ENCODE measurements at regions of chr11 and their contacts with region 1.

Region 1: GRCh38 chr11:45655347-45655756 is 10.1 kb downstream of the CHST1 start:
- DNase-seq: peak; percentile 76 to 89 (median 88)
- ATAC-seq: peak; percentile 30 to 39
- H3K4me3 ChIP-seq: no peak overlapping the region
- H3K27ac ChIP-seq: no peak overlapping the region
- H3K4me1 ChIP-seq: peaks cover 2% of the 10 kb centered on the region
- H3K27me3 ChIP-seq: no peaks in the 10 kb centered on the region

Region 2: GRCh38 chr11:45371251-45372115 is 283.9 kb before region 1 on chr11:
- intact Hi-C with region 1: loop called in 3 of 4 experiments (anchors 5 to 10 kb)
- DNase-seq: peak; percentile 50 to 83 (median 79)
- ATAC-seq: peak; percentile 46 to 53
- H3K4me3 ChIP-seq: no peak overlapping the region
- H3K27ac ChIP-seq: no peak overlapping the region
- H3K4me1 ChIP-seq: no peaks in the 10 kb centered on the region
- H3K27me3 ChIP-seq: no peaks in the 10 kb centered on the region

Region 3: DNA sequence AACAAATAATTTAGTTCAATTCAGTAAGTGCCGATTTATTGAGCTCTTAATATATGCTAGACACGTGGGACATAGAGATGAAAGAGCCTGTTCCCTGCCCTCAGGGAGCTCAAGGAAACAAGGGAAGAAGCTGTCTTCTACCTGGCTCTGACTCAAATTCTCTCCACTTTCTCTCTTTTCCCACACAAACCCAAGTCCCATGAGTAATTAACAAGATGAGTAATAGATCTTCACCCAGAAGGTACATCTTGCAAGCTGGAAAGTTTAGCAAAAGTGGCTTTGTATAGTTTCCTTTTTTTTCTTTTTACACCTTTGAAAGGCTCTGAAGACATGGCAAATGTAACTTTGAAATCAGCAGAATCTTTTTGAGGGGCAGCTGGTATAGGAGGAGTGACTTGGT is 58.2 kb after region 1 on chr11:
- intact Hi-C with region 1: no loop called
- DNase-seq: no peak
- ATAC-seq: no peak
- H3K4me3 ChIP-seq: no peak overlapping the region
- H3K27ac ChIP-seq: no peak overlapping the region
- H3K4me1 ChIP-seq: no peaks in the 10 kb centered on the region
- H3K27me3 ChIP-seq: no peaks in the 10 kb centered on the region

Region 4: GRCh38 chr11:45922425-45923082 is 267.2 kb after region 1 on chr11 and contains the start of gene LARGE2:
- intact Hi-C with region 1: no loop called
- DNase-seq: peak in 2 of 3 donors; percentile 61 to 63
- ATAC-seq: no peak
- H3K4me3 ChIP-seq: peak within 1 kb of the TSS; percentile 44
- H3K27ac ChIP-seq: no peak within 1 kb of the TSS
- H3K4me1 ChIP-seq: no peaks in the 10 kb centered on the region
- H3K27me3 ChIP-seq: no peaks in the 10 kb centered on the region
- total RNA-seq, gene LARGE2: 0.18 to 0.48 (median 0.20) TPM in 3 of 4 donors, not detected in the other

Measured in right cardiac atrium (tissue), 5 donors.